Posterior vena cava (tissue), 2 donors: ENCODE measurements at regions of chr4 and their contacts with region 1.

Region 1: GRCh38 chr4:20544645-20545044 is 155.6 kb upstream of the PACRGL start:
- DNase-seq: no peak

Region 2: GRCh38 chr4:18689308-18690115 is 1855.1 kb before region 1 on chr4:
- intact Hi-C with region 1: loop called in 1 of 2 experiments (anchors 5 kb)
- DNase-seq: no peak

Region 3: DNA sequence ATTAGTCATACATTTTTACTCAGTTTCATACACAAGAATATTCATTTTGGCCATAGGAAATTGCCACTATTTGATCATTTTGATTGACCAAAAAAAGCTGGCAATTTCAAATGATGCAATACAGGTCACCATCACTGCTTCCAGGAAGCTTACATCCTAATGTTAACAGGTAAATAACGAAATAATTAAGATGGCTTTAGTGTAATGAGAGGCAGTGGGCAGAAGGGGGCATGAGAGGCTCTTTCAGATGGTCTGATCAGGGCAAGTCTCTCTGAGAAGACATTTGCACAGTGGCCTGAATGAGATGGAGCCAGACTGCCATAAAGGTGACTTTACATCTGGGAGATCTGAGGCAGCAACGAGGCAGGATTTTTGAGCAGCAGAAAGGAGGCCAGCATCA is 122.2 kb before region 1 on chr4:
- intact Hi-C with region 1: loop called (anchors 10 kb)
- DNase-seq: no peak

Region 4: DNA sequence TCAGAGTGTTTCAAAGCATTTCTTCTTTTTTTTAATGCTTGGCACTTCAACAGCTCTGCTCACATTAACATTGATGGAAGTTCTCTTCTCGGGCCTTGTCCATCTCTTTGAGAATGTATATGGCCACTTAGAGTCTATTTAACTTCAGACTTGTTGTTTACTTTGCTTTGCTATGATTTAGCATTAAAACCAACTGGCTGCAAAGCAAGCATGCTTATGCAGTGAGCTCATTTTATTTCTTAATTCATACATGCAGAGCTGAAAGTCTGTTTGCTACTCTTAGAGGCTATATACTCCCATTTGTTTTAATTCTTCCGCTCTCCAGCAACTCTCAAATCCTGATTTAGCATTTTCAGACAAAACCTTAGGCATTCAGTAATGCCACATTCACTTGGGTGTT is 48.0 kb after region 1 on chr4:
- intact Hi-C with region 1: no loop called
- DNase-seq: no peak